HEK293 (cell line): ENCODE measurements at regions of chr3 and their contacts with region 1.

Region 1: GRCh38 chr3:120417272-120417911 is 33.4 kb downstream of the FSTL1 start:
- H3K4me3 ChIP-seq: peak overlapping the region; percentile 13
- H3K27ac ChIP-seq: peak overlapping the region; percentile 40; the same call in 1 of the 2 replicates
- H3K4me1 ChIP-seq: no peaks in the 10 kb centered on the region
- CTCF ChIP-seq: peak; percentile 71; the same call in 1 of the 2 replicates

Region 2: GRCh38 chr3:120147072-120147871 is 270.1 kb before region 1 on chr3:
- CTCF ChIA-PET with region 1: no interaction called
- POLR2A ChIA-PET with region 1: no interaction called
- H3K4me3 ChIP-seq: no peak overlapping the region
- H3K27ac ChIP-seq: no peak overlapping the region
- H3K4me1 ChIP-seq: no peaks in the 10 kb centered on the region
- CTCF ChIP-seq: no peak

Region 3: GRCh38 chr3:120245386-120245785 is 172.0 kb before region 1 on chr3:
- CTCF ChIA-PET with region 1: interaction called, 64 read pairs
- POLR2A ChIA-PET with region 1: interaction called, 6 read pairs
- H3K4me3 ChIP-seq: no peak overlapping the region
- H3K27ac ChIP-seq: no peak overlapping the region
- H3K4me1 ChIP-seq: no peaks in the 10 kb centered on the region
- CTCF ChIP-seq: no peak

Region 4: DNA sequence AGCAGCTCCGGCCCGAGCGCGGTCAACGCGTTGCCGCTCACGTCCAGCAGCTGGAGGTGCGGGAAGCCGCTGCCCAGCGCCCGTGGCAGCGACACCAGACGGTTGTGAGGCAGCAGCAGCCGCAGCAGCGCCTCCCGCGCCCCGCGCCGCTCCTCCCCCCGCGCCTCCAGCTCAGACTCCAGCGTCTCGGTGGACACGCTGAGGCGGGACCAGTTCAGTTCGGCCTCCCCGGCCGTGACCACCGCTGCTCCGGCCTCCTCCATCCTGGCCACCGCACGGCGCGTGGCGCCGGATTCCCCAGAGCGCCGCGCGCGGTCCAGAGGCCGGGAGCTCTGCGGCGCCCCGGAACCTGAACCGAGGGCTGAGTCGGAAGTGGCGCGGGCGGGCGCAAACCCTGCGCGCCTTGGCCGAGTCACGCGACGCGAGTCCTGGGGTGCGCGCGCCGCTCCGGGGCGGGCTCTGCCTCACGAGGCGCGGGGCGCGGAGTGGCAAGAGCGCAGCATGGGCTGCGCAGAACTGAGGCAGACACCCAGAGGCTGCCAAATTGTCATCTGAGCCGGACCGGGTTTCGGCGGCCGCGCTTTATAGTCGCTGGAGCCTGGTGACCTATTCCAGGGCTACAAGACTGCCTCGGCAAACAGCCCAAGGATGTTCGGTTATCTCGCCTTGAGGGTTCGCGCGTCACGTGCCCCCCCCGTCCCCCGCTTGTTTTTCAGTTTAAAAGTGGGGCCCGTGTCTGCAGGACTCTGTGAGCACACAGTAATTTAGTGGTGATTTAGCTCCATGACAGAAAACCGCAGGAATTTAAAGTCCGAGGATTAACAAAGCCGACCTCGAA is 68.2 kb before region 1 on chr3 and contains the start of gene LRRC58:
- CTCF ChIA-PET with region 1: interaction called, 17 read pairs
- POLR2A ChIA-PET with region 1: interaction called, 9 read pairs
- H3K4me3 ChIP-seq: peak within 1 kb of the TSS; percentile 91
- H3K27ac ChIP-seq: peak within 1 kb of the TSS; percentile 82
- H3K4me1 ChIP-seq: peaks cover 12% of the 10 kb centered on the region
- CTCF ChIP-seq: peak; percentile 89

Region 5: GRCh38 chr3:120404876-120405275 is 12.5 kb before region 1 on chr3:
- CTCF ChIA-PET with region 1: interaction called, 10 read pairs
- POLR2A ChIA-PET with region 1: no interaction called
- H3K4me3 ChIP-seq: no peak overlapping the region
- H3K27ac ChIP-seq: no peak overlapping the region
- H3K4me1 ChIP-seq: no peaks in the 10 kb centered on the region
- CTCF ChIP-seq: no peak

Region 6: GRCh38 chr3:120446891-120447668 is 29.7 kb after region 1 on chr3:
- CTCF ChIA-PET with region 1: interaction called, 13 read pairs
- POLR2A ChIA-PET with region 1: interaction called, 7 read pairs
- H3K4me3 ChIP-seq: no peak overlapping the region
- H3K27ac ChIP-seq: no peak overlapping the region
- H3K4me1 ChIP-seq: peaks cover 7% of the 10 kb centered on the region; the same call in 1 of the 2 replicates
- CTCF ChIP-seq: no peak

Region 7: GRCh38 chr3:120506828-120507774 is 89.7 kb after region 1 on chr3:
- CTCF ChIA-PET with region 1: interaction called, 10 read pairs
- POLR2A ChIA-PET with region 1: no interaction called
- H3K4me3 ChIP-seq: no peak overlapping the region
- H3K27ac ChIP-seq: no peak overlapping the region
- H3K4me1 ChIP-seq: no peaks in the 10 kb centered on the region
- CTCF ChIP-seq: no peak

Region 8: GRCh38 chr3:120558771-120559241 is 141.4 kb after region 1 on chr3:
- CTCF ChIA-PET with region 1: interaction called, 83 read pairs
- POLR2A ChIA-PET with region 1: interaction called, 4 read pairs
- H3K4me3 ChIP-seq: peak overlapping the region; percentile 43
- H3K27ac ChIP-seq: no peak overlapping the region
- H3K4me1 ChIP-seq: no peaks in the 10 kb centered on the region
- CTCF ChIP-seq: peak; percentile 65; the same call in 1 of the 2 replicates

Region 9: GRCh38 chr3:120642368-120642948 is 225.1 kb after region 1 on chr3:
- CTCF ChIA-PET with region 1: no interaction called
- POLR2A ChIA-PET with region 1: no interaction called
- H3K4me3 ChIP-seq: no peak overlapping the region
- H3K27ac ChIP-seq: no peak overlapping the region
- H3K4me1 ChIP-seq: no peaks in the 10 kb centered on the region
- CTCF ChIP-seq: no peak

Region 10: DNA sequence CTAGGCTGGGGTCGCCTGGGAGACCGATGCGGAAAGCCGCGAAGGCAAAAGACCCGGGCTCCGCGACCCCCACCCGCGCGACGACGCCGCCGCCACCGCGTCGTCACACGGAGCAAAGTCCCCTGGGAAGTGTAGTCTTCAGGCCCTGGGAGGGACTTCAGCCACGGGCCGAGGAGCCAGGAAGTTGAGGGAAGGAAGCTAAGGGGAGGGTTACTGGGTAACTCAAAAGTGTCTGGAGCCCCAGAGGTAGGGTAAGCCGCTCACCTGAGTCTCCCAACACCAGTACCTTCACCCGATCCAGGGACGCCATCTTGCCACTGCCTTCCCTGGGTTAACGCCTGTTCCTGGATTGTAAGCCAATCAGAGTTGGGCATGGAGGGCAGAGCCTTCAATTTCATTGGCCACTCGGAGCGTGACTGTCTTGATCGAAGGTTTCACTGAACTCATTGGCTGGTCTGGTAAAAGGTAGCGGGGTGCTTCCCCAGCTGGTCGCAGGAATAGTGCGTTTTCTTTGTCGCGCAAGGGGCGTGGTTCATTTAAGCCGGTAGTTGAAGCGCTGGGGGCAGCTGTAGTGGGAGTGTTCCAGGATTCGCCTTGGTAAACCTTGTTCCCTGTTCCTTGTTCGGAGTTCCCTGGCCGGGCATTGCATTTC is 324.9 kb after region 1 on chr3 and contains the starts of genes GTF2E1 and RABL3:
- CTCF ChIA-PET with region 1: no interaction called
- POLR2A ChIA-PET with region 1: no interaction called
- H3K4me3 ChIP-seq: peak within 1 kb of the TSS; percentile 100
- H3K27ac ChIP-seq: peak within 1 kb of the TSS; percentile 47
- H3K4me1 ChIP-seq: no peaks in the 10 kb centered on the region
- CTCF ChIP-seq: no peak